HEK293 (cell line): ENCODE measurements at regions of chr20 and their contacts with region 1.

Region 1: GRCh38 chr20:36773597-36774390 is at the start of gene DSN1:
- H3K4me3 ChIP-seq: peak within 1 kb of the TSS; percentile 81
- H3K27ac ChIP-seq: peak within 1 kb of the TSS; percentile 77
- H3K4me1 ChIP-seq: peaks cover 4% of the 10 kb centered on the region; the same call in 1 of the 2 replicates
- CTCF ChIP-seq: no peak; the same call in 1 of the 2 replicates

Region 2: GRCh38 chr20:36745927-36746659 is 27.7 kb before region 1 on chr20 and contains the start of gene NDRG3:
- CTCF ChIA-PET with region 1: interaction called, 12 read pairs
- POLR2A ChIA-PET with region 1: interaction called, 3 read pairs
- H3K4me3 ChIP-seq: peak within 1 kb of the TSS; percentile 89
- H3K27ac ChIP-seq: peak within 1 kb of the TSS; percentile 32; the same call in 1 of the 2 replicates
- H3K4me1 ChIP-seq: no peaks in the 10 kb centered on the region; the same call in 1 of the 2 replicates
- CTCF ChIP-seq: no peak

Region 3: DNA sequence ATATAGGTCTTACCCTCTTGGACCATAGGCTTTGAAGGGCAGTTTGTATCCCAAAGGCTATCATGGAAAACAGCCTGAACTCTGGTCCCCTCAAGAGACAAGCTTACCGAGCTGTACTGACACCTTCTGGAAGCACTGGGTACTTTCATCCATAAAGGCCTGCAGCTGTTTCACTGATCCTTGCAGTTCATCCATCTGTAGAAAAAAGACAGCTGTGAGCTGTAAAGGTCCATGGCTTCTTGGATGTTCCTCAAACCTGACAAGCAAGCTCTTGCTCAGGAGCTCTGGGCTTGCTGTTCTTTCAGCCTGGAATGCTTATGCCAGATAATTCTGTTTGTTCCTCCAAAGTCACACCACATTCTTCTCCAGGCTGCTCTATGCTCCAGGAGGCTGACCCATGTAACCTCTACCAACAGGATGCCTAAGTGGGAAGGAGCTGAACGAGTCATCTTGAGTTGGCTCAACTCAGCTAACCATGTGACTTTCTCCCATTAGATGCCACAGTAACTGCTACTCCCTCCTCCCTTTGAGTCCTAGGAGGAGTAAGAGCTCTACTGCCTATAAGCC is 19.1 kb before region 1 on chr20:
- CTCF ChIA-PET with region 1: interaction called, 18 read pairs
- POLR2A ChIA-PET with region 1: no interaction called
- H3K4me3 ChIP-seq: no peak overlapping the region
- H3K27ac ChIP-seq: no peak overlapping the region
- H3K4me1 ChIP-seq: no peaks in the 10 kb centered on the region
- CTCF ChIP-seq: no peak; the same call in 1 of the 2 replicates

Region 4: DNA sequence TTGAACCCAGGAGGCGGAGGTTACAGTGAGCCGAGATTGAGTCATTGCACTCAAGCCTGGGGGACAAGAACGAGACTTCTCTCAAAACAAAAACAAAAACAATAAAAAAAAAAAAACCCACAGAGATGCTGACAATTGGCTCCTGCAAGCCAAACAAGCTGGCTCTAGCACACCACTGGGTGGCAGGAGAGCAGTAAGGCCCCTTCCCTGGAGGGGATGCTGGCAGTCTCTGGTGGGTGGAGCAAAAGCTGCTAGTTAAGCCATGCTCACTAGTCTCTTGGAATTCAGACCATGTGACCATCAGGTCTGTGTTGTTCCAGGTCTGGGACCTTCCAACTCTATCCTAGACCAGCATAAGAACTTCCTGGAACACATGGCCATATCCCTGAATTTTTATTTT is 18.6 kb after region 1 on chr20:
- CTCF ChIA-PET with region 1: interaction called, 19 read pairs
- POLR2A ChIA-PET with region 1: interaction called, 12 read pairs
- H3K4me3 ChIP-seq: no peak overlapping the region
- H3K27ac ChIP-seq: no peak overlapping the region
- H3K4me1 ChIP-seq: no peaks in the 10 kb centered on the region
- CTCF ChIP-seq: peak; percentile 49

Region 5: DNA sequence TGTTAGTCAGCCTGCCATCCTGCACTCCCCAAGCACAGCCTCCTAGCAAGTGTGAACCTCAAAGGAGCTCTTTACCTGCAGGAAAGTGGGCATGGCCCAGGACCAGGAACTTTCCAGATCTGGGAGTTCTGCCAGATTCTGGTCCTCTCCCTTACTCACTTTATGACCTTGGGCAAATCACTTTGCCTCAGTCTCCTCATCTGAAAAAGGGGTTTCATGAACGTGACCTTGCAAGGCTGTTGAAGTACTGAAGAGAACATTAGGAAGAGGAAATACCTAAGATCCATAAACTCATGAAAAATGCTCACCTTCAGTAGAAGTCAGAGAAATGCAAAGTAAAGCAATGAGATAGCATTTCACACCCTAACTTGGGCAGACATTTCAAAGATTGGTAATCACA is 26.6 kb after region 1 on chr20:
- CTCF ChIA-PET with region 1: interaction called, 15 read pairs
- POLR2A ChIA-PET with region 1: no interaction called
- H3K4me3 ChIP-seq: no peak overlapping the region
- H3K27ac ChIP-seq: no peak overlapping the region
- H3K4me1 ChIP-seq: no peaks in the 10 kb centered on the region
- CTCF ChIP-seq: no peak